HAP-1 (cell line): ENCODE measurements at regions of chr19 and their contacts with region 1.

Region 1: DNA sequence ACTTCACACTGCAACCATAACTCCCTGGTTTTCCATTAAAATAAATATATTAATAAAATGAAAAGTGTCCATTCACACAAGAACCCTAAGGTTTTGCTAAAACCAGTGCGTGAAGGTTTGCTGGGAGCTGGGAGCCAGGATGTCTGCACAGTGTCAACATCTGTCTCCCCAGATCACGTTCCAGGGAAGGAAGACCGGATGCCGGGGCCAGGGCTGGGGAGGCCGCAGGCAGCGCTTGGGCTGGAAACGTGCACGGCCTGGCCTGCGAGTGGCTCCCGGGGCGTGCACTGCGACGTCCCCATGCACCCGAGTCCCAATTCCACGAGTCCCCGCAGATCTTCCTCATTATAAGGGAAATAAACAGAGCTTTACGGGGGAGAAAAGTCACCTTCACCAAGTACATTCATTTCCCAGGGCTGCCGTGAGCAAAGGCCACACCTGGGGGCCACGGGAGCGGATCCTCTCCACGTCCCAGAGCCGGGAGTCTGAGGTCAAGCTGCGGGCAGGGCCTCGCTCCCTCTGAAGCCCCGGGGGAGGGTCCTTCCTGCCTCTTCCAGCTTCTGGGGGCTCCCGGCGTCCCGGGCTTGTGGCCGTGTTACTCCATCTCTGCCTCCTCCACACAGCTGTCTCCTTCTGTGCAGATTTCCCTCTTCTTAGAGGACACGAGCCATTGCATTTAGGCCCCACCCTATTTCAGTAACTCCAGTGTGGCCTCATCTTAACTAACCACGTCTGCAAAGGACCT is 12.8 kb downstream of the SHC2 start:
- DNase-seq: no peak
- H3K4me3 ChIP-seq: no peak overlapping the region
- H3K4me1 ChIP-seq: no peaks in the 10 kb centered on the region
- H3K27me3 ChIP-seq: no peaks in the 10 kb centered on the region

Region 2: GRCh38 chr19:328025-328505 is 119.9 kb before region 1 on chr19:
- in situ Hi-C with region 1: loop called (anchors 10 kb)
- DNase-seq: no peak
- H3K4me3 ChIP-seq: no peak overlapping the region
- H3K4me1 ChIP-seq: no peaks in the 10 kb centered on the region
- H3K27me3 ChIP-seq: no peaks in the 10 kb centered on the region